ENCODE measurements at regions of chr3 and their contacts with region 1.

Region 1: DNA sequence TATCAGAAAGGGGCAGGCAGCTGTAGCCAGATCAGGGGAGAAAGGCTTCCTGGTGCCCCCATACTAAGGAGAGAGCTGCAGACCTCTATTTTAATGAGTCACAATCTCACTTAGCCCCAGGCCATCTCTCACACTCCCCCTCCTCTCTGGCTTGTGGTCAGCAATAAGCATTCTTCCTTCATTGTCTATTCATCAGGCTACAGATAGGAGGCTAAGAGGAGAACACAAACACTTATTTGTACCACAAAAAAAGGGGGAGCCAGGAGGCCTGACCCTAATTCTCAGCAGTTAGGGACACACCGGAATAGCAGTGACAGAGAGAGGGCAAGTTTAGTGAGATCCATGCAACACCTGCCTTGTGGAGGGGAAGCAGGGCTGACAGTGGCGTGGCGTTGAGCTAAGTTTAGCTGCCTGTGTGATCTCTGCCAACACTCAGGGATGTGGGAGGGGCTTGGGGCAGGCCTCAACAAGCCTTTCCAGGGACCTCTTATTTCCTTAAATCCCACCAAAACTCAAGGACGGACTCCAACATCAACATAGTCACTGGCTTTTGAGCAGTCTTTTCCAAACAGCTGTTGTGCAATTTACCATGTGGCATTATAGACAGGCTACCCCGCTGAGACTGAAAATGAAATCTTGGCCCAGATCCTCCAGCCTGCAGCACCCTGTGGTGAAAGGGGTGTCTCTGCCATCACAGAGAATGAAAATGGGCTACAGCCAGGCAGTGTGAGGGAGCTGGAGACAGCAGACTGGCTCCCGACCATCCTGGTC is 191.9 kb upstream of the TSC22D2 start:
- DNase-seq: no peak
- ATAC-seq: no peak
- H3K4me3 Mint-ChIP-seq: no peak overlapping the region
- H3K27ac Mint-ChIP-seq: no peak overlapping the region
- H3K4me1 Mint-ChIP-seq: peaks cover 1% of the 10 kb centered on the region
- H3K27me3 Mint-ChIP-seq: peaks cover 23% of the 10 kb centered on the region

Region 2: DNA sequence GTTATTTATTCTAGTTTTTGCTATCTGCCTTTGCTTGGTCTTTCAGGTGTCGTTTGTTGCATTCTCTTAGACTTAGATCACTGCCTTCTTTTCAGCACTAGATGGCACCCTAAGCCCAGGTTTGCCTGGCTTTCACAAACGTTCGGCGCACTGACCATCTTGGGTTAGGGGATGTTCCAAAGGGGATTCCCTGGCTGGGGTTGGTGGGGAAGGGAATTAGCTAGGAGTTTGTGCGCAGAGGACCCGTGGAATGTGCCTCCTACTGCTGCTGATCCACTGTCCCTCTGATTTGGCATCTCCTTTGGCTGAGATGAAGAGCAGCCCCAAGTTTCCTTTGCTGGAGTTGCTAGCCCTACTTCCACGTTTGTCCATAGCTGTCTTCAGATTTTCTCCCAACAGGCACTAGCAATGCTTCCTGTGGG is 279.4 kb before region 1 on chr3:
- CTCF ChIA-PET with region 1: interaction called, 5 read pairs
- POLR2A ChIA-PET with region 1: no interaction called
- intact Hi-C with region 1: loop called in 1 of 2 experiments (anchors 1 kb)
- DNase-seq: peak; percentile 59
- ATAC-seq: peak; percentile 55
- H3K4me3 Mint-ChIP-seq: no peak overlapping the region
- H3K27ac Mint-ChIP-seq: no peak overlapping the region
- H3K4me1 Mint-ChIP-seq: peaks cover 18% of the 10 kb centered on the region
- H3K27me3 Mint-ChIP-seq: no peaks in the 10 kb centered on the region

Region 3: DNA sequence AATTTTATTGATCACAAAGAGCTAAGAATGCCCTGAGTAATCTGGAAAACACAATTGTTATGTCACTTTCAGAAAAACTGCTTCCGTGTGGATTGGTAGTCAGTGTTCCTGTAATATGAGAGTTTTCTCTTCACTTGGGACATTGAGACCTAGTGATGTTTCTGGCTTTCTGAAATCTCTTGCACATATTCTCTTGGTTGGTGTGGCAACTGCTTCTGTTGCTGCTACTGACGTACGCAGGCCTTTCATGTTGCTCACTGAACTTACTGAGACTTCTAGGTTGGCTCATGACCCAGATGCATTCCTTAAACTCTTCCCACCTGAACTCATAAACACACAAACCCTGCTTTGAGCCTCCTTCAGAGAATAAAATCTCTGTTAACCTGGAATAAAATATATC is 70.6 kb before region 1 on chr3:
- CTCF ChIA-PET with region 1: no interaction called
- POLR2A ChIA-PET with region 1: no interaction called
- intact Hi-C with region 1: no loop called
- DNase-seq: no peak
- ATAC-seq: no peak
- H3K4me3 Mint-ChIP-seq: no peak overlapping the region
- H3K27ac Mint-ChIP-seq: no peak overlapping the region
- H3K4me1 Mint-ChIP-seq: no peaks in the 10 kb centered on the region
- H3K27me3 Mint-ChIP-seq: peaks cover 6% of the 10 kb centered on the region

Region 4: DNA sequence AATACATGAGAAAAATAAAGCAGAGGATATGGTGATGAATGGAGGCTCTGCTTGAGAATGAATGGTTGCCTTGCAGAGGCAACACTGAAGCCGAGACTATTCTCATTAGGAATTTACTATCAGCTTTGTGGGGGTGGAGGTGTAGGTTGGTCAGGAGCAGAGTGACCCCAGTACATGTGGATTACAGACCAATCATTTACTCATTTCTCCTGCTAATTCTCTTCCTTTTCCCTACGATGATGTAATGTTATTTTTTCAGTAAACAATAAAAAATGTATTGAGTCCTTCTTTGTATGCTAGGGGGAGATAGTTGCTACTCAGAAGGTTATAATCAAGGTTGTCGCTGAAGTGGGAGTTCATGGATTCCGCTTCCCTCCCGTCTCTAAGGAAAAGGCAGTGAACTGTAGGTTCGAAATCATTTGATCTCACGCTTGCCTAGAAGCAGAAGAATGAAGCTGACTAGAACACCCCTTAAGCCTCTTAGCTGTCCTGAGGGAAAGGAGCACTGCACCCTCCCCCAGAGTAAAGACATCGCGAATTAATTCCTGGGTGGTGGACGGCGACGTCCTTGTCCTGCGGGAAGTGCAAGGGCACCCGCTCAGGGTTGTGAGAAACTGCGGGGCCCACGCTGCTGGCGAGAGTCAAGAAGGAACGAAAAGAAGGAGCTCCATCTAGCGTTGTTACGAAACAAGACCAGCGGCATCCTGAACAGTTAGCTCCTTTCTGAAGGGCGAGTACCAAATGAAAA is 32.4 kb before region 1 on chr3:
- CTCF ChIA-PET with region 1: interaction called, 6 read pairs
- POLR2A ChIA-PET with region 1: no interaction called
- intact Hi-C with region 1: loop called in 1 of 2 experiments (anchors 2 kb)
- DNase-seq: peak; percentile 71
- ATAC-seq: peak; percentile 95
- H3K4me3 Mint-ChIP-seq: no peak overlapping the region
- H3K27ac Mint-ChIP-seq: no peak overlapping the region
- H3K4me1 Mint-ChIP-seq: no peaks in the 10 kb centered on the region
- H3K27me3 Mint-ChIP-seq: peaks cover 26% of the 10 kb centered on the region

Region 5: GRCh38 chr3:150202711-150203110 is 13.5 kb before region 1 on chr3:
- CTCF ChIA-PET with region 1: interaction called, 10 read pairs
- POLR2A ChIA-PET with region 1: no interaction called
- intact Hi-C with region 1: no loop called
- DNase-seq: no peak
- ATAC-seq: no peak
- H3K4me3 Mint-ChIP-seq: no peak overlapping the region
- H3K27ac Mint-ChIP-seq: no peak overlapping the region
- H3K4me1 Mint-ChIP-seq: no peaks in the 10 kb centered on the region
- H3K27me3 Mint-ChIP-seq: peaks cover 14% of the 10 kb centered on the region

Region 6: GRCh38 chr3:150546226-150547044 is 330.2 kb after region 1 on chr3 and contains the starts of genes EIF2A and SERP1:
- CTCF ChIA-PET with region 1: no interaction called
- POLR2A ChIA-PET with region 1: no interaction called
- intact Hi-C with region 1: no loop called
- DNase-seq: peak; percentile 99
- ATAC-seq: peak; percentile 92
- H3K4me3 Mint-ChIP-seq: peak within 1 kb of the TSS; percentile 90
- H3K27ac Mint-ChIP-seq: peak within 1 kb of the TSS; percentile 96
- H3K4me1 Mint-ChIP-seq: peaks cover 68% of the 10 kb centered on the region
- H3K27me3 Mint-ChIP-seq: no peaks in the 10 kb centered on the region
- total RNA-seq, gene EIF2A: 119 to 182 TPM
- total RNA-seq, gene SERP1: 84.6 to 96.1 TPM

Measured in activated CD4-positive, alpha-beta T cell treated with anti-CD3 and anti-CD28 coated beads for 36 hours (primary cell).